Activated CD4-positive, alpha-beta T cell treated with anti-CD3 and anti-CD28 coated beads for 36 hours (primary cell): ENCODE measurements at regions of chr2 and their contacts with region 1.

Region 1: GRCh38 chr2:8836971-8837794 is at the start of gene KIDINS220:
- DNase-seq: peak; percentile 92
- ATAC-seq: peak; percentile 95
- H3K4me3 Mint-ChIP-seq: peak within 1 kb of the TSS; percentile 99
- H3K27ac Mint-ChIP-seq: peak within 1 kb of the TSS; percentile 98
- H3K4me1 Mint-ChIP-seq: peaks cover 39% of the 10 kb centered on the region
- H3K27me3 Mint-ChIP-seq: no peaks in the 10 kb centered on the region
- total RNA-seq, gene KIDINS220: 22.7 to 24.4 TPM

Region 2: GRCh38 chr2:8786463-8786862 is 50.7 kb before region 1 on chr2:
- CTCF ChIA-PET with region 1: no interaction called
- POLR2A ChIA-PET with region 1: no interaction called
- intact Hi-C with region 1: no loop called
- DNase-seq: no peak
- ATAC-seq: no peak
- H3K4me3 Mint-ChIP-seq: no peak overlapping the region
- H3K27ac Mint-ChIP-seq: no peak overlapping the region
- H3K4me1 Mint-ChIP-seq: no peaks in the 10 kb centered on the region
- H3K27me3 Mint-ChIP-seq: no peaks in the 10 kb centered on the region

Region 3: DNA sequence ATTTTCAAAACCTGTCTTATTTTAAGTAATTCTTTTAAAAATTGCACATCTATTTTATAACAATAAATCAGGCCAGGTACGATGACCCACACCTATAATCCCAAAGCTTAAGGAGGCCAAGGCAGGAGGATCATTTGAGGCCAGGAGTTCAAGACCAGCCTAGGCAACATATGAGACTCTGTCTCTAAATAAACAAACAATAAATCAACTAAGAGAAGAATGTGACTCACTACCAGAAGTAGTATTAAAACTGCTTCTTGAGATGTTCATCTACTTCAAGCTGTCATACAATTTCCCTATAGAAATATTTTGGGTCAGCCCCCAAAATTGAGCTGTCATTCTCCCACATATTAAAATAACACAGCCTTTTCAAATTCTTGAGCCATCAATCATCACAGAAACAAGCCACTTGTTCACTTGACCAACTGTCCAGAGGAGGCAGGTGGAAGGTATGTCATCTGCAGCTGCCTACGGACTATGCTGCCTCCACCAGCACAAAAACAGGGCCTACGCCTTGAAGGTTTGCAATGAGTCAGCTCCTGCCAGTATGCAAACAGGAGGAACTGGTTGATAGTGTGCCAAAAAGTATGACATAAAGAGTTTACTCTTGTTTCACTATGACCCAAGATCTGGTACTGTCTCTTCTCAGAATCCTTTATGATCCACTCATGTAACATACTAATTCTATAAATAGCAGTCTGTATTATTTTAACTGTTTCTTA is 33.4 kb before region 1 on chr2:
- CTCF ChIA-PET with region 1: no interaction called
- POLR2A ChIA-PET with region 1: no interaction called
- intact Hi-C with region 1: loop called in 1 of 2 experiments (anchors 1 kb)
- DNase-seq: peak; percentile 77
- ATAC-seq: peak; percentile 98
- H3K4me3 Mint-ChIP-seq: no peak overlapping the region
- H3K27ac Mint-ChIP-seq: peak overlapping the region; percentile 82
- H3K4me1 Mint-ChIP-seq: peaks cover 27% of the 10 kb centered on the region
- H3K27me3 Mint-ChIP-seq: no peaks in the 10 kb centered on the region

Region 4: DNA sequence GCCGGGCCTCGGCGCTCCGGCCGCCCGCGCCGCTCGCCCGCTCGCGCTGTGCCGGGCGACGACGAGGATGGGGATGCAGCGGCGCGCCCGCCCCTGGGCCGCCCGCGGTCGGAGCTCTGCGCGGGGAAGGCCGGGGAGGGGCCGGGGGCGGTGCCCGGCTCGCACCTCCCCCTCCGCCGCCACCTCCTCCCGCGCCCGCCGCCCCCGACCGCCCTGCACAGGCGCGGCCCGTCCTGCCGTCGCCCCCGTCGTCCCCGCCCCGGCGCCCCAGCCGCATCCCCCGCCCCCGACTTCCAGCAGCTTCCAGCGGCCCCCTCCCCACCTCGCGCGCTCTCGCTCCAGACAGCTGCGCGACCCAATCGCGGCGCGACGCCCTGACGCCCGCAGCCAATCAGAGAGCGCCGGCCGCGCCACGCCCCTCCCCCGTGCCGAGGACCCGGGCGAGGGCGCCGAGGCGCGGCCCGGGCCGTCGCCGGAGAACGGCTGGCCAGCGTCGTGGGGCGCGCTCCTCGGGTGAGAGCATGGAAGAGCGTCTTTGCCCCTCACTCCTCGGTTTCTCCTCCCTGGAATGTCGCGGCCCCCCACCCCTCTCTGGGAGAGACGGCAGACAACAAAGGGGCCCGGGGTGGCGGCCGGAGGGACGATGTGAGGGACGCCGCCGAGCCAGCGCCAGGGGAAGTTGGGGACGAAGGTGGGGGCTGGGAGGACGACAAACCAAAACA is 166.6 kb after region 1 on chr2 and contains the start of gene MBOAT2:
- CTCF ChIA-PET with region 1: no interaction called
- POLR2A ChIA-PET with region 1: no interaction called
- intact Hi-C with region 1: loop called in 1 of 2 experiments (anchors 1 kb)
- DNase-seq: peak; percentile 89
- ATAC-seq: peak; percentile 96
- H3K4me3 Mint-ChIP-seq: peak within 1 kb of the TSS; percentile 75
- H3K27ac Mint-ChIP-seq: peak within 1 kb of the TSS; percentile 64
- H3K4me1 Mint-ChIP-seq: peaks cover 11% of the 10 kb centered on the region
- H3K27me3 Mint-ChIP-seq: peaks cover 6% of the 10 kb centered on the region
- total RNA-seq, gene MBOAT2: 4.7 to 6.9 TPM